ENCODE measurements at regions of chr1 and their contacts with region 1.

Region 1: DNA sequence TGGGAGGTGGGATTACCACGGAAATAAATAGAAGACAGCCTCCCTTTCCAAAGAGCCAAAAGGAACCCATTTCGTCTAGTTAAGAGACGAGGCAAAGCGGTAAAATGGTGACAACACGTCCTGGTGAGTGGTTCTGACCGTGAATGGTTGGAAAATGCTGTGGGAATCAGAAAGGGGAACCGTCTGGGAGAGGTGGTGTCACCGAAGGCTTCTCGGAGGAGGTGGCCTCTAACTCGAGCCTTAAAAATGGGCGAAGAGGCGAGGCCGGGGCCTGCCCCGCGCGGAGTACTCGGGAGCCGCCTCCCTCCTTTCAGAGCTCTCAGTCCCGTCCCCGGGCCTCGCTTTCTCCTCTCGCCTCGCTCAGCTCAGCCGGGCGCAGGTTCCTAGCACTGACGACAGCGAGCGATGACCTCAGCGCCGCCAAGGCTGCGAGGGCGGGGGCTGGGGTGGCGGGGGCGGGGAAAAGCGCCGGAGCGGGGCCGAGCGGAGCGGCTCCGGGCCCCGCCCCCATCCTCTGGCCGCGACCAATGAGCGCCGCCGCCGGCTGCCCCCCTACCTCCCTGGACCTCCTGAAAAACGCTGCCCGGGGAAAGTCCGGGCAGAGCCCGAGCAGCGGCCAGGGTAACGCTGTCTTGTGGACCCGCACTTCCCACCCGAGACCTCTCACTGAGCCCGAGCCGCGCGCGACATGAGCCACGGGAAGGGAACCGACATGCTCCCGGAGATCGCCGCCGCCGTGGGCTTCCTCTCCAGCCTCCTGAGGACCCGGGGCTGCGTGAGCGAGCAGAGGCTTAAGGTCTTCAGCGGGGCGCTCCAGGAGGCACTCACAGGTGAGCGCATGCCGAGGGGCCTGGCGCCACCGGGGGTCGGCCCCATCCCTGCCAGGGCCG is at the start of gene BTG2:
- DNase-seq: peak; percentile 92
- ATAC-seq: peak; percentile 76
- H3K4me3 Mint-ChIP-seq: peak within 1 kb of the TSS; percentile 94
- H3K27ac Mint-ChIP-seq: peak within 1 kb of the TSS; percentile 95
- H3K4me1 Mint-ChIP-seq: peaks cover 55% of the 10 kb centered on the region
- H3K27me3 Mint-ChIP-seq: no peaks in the 10 kb centered on the region
- total RNA-seq, gene BTG2: 90.3 to 99.8 TPM

Region 2: GRCh38 chr1:203197625-203198024 is 107.5 kb before region 1 on chr1:
- POLR2A ChIA-PET with region 1: no interaction called
- DNase-seq: no peak
- ATAC-seq: no peak
- H3K4me3 Mint-ChIP-seq: no peak overlapping the region
- H3K27ac Mint-ChIP-seq: no peak overlapping the region
- H3K4me1 Mint-ChIP-seq: no peaks in the 10 kb centered on the region
- H3K27me3 Mint-ChIP-seq: peaks cover 12% of the 10 kb centered on the region

Region 3: DNA sequence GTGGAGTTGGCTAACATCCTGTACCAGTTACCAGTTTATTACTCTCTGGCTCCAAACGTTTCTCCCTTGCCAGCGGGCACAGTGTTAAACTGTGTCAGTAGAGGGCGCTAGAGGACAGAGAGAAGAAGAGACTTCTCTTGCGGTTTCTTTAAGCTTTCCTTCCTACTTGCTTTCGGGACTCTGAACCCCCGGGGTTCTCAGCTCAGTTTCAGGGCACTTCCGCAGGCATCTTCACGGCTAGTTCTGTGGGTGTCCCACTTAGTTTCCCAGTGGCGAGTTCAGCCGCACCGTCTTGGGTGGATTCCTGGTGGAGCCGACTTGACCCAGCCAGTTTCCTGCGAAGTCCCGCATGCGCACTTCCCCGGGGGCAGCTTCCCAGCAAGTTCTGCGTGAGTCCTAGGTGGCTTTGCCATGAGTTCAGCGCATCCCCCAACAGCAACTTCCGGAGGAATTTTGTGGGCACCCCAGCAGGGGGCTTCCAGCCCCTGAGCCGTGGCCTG is 37.8 kb before region 1 on chr1:
- POLR2A ChIA-PET with region 1: interaction called, 21 read pairs
- DNase-seq: peak; percentile 77
- ATAC-seq: peak; percentile 60
- H3K4me3 Mint-ChIP-seq: peak overlapping the region; percentile 85
- H3K27ac Mint-ChIP-seq: peak overlapping the region; percentile 61
- H3K4me1 Mint-ChIP-seq: peaks cover 18% of the 10 kb centered on the region
- H3K27me3 Mint-ChIP-seq: peaks cover 4% of the 10 kb centered on the region

Region 4: GRCh38 chr1:203273206-203273868 is 31.8 kb before region 1 on chr1:
- POLR2A ChIA-PET with region 1: interaction called, 83 read pairs
- DNase-seq: peak; percentile 95
- ATAC-seq: peak; percentile 69
- H3K4me3 Mint-ChIP-seq: peak overlapping the region; percentile 75
- H3K27ac Mint-ChIP-seq: peak overlapping the region; percentile 87
- H3K4me1 Mint-ChIP-seq: peaks cover 48% of the 10 kb centered on the region
- H3K27me3 Mint-ChIP-seq: no peaks in the 10 kb centered on the region

Region 5: DNA sequence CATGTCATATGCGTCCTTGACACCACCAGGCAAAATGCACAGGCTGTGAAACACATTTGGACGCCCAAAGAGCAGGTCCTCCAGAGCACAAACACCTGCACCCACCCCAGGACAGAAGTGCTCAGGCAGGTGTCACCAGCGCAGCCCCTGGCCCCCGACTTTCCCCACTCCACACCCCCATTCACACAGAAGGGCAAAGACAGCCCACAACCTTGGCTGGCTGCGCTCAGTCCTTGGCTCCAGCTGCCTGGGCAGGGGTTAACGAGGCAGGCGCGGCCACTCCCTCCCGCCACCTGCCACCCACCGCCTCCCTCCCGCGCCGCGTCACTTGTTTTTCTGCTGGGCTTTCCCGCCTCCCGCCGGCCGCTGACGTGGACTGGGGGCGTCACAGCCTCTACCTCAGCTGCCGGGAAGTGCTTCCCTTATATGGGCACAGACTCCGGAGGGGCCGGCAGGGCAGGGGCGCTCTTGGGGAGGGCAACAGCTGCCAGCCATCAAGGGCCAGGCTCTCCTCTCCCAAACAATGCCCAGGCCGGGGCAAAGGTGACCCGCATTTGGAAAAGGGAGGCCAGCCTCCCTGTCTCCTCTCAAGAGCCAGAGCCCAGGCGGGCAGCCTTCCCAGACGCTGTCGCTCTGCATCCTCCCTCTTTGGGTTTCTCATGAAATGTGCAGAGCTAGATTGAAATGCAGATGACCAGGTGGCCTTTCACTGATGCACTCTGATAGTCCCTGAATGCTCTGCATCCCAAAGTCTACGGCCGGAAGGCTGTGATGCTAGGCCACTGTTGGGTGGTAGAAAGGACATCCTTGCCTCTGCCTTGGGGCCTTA is 14.7 kb before region 1 on chr1:
- POLR2A ChIA-PET with region 1: interaction called, 247 read pairs
- DNase-seq: peak; percentile 94
- ATAC-seq: peak; percentile 46
- H3K4me3 Mint-ChIP-seq: peak overlapping the region; percentile 82
- H3K27ac Mint-ChIP-seq: peak overlapping the region; percentile 98
- H3K4me1 Mint-ChIP-seq: peaks cover 60% of the 10 kb centered on the region
- H3K27me3 Mint-ChIP-seq: no peaks in the 10 kb centered on the region

Region 6: GRCh38 chr1:203316626-203317093 is 11.5 kb after region 1 on chr1:
- POLR2A ChIA-PET with region 1: interaction called, 309 read pairs
- DNase-seq: no peak
- ATAC-seq: no peak
- H3K4me3 Mint-ChIP-seq: no peak overlapping the region
- H3K27ac Mint-ChIP-seq: no peak overlapping the region
- H3K4me1 Mint-ChIP-seq: peaks cover 33% of the 10 kb centered on the region
- H3K27me3 Mint-ChIP-seq: peaks cover 4% of the 10 kb centered on the region

Region 7: DNA sequence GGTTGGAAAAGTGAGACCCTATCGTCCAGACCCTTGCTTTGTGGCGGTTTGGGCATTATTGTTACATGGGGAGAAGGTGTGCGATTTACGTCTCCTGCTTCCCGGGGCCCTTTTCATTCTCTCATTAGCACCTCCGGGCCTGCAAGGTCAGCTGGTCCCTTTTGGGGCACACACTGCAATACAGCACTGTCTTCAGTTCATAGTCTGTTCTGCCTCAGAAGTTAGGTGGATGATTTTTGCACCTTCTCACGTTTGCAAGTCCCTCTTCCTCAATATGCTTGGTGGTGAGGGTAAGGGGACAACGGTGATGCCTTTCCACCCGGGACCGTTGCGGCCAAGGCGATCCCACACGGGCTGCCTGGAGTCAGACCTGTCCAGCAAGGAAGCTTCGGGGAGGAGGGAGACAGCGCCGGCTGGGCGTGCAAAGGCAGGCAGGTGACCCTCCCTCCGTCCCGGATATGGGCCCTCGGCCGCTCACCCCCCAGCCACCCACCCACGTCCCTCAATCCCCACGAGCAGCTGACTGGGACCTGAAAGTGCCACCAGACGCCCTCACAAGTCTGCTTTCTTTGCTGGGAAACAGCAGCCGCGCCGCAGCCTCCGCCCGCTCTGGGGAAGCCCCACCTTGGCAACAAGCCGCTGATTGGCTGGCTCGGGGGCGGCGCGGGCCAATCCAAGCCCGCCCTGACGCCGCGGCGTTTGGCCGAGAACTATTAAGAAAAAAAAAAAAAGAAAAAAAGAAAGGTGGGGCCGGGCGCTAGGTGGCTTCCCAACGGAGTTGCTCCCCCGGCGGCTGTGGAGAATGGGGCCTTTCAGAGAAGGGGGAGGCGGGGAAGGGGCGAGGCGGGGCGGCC is 21.9 kb after region 1 on chr1:
- POLR2A ChIA-PET with region 1: interaction called, 309 read pairs
- DNase-seq: peak; percentile 95
- ATAC-seq: peak; percentile 86
- H3K4me3 Mint-ChIP-seq: peak overlapping the region; percentile 74
- H3K27ac Mint-ChIP-seq: peak overlapping the region; percentile 90
- H3K4me1 Mint-ChIP-seq: peaks cover 50% of the 10 kb centered on the region
- H3K27me3 Mint-ChIP-seq: peaks cover 3% of the 10 kb centered on the region

Region 8: DNA sequence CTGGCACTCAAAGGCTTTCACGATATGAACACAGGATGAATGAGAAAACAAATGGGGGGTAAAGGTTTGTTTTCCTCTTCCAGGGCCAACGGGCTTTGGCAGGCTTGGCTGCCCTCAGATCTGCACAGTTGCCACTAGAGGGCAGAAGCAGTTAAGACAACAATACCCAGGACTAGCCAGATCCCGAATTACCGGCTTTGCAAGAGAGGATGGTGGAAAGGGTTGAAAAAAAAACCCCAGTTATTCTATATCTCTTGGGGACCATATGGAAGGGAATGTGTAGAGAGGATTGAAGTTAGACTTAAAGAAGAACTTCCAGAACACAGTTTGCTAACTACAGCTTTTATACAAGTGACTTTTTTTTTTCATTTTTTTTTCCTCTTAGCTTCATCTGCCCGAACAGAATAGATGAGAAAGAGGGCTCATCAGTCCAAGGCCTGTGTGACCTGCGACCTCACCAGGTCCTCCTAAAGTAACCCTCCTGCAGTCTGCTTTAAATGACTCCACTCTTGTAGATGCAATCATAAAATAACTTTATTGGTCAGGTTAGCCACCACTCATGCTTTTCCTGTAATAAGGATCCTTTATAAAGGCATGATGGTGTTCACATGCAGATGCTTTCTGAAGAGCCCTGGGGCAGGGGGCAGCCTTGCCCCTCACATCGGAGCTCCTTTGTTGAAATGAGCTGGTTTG is 35.1 kb after region 1 on chr1:
- POLR2A ChIA-PET with region 1: interaction called, 14 read pairs
- DNase-seq: no peak
- ATAC-seq: peak; percentile 73
- H3K4me3 Mint-ChIP-seq: no peak overlapping the region
- H3K27ac Mint-ChIP-seq: no peak overlapping the region
- H3K4me1 Mint-ChIP-seq: peaks cover 14% of the 10 kb centered on the region
- H3K27me3 Mint-ChIP-seq: peaks cover 26% of the 10 kb centered on the region

Region 9: DNA sequence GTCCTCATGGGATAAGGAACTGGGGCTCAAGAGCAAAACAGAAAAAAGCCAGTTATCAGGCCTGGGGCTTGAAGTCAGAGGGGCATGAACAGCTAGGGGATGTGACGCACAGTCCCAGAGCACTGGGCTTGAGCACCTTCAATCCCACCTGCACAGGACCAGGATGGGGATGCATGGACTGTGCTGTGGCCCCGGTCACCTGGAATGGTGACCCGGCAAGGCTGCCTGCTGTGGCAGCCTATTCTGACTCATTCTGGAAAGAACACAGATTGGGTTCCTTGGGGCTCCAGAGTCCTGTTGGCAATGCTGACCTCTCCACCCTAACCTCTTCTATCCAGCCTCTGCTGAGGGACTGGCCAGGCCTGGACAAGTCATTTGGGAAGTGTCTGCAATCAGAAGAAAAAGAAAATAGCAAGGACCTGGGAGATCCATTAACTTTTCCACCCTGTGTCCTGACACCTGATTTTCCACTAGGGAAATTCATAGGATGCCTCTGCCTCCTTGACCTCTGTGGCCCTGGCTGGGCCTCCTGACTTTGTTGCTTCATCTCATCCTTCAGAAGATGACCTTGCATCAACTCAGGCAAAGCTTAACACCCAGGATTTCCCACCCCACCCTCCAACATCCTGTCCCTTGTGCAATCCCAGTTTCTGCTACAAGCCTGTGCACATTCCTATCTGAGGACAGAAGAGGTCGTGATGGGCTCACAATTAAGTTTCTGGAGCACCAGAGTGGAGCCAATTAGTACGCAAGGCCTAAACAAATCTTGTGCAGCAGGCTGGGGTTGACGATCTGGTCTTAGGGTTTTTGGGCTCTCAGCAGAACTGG is 63.7 kb after region 1 on chr1:
- POLR2A ChIA-PET with region 1: no interaction called
- DNase-seq: no peak
- ATAC-seq: no peak
- H3K4me3 Mint-ChIP-seq: no peak overlapping the region
- H3K27ac Mint-ChIP-seq: no peak overlapping the region
- H3K4me1 Mint-ChIP-seq: no peaks in the 10 kb centered on the region
- H3K27me3 Mint-ChIP-seq: peaks cover 27% of the 10 kb centered on the region

Measured in activated naive CD8-positive, alpha-beta T cell treated with anti-CD3 and anti-CD28 coated beads, Interleukin-2, amount 10 ng/mL, durations not matched to agents 7 days and 5 days (primary cell).